Psoas muscle (tissue), 8 donors: ENCODE measurements at regions of chr1 and their contacts with region 1.

Region 1: DNA sequence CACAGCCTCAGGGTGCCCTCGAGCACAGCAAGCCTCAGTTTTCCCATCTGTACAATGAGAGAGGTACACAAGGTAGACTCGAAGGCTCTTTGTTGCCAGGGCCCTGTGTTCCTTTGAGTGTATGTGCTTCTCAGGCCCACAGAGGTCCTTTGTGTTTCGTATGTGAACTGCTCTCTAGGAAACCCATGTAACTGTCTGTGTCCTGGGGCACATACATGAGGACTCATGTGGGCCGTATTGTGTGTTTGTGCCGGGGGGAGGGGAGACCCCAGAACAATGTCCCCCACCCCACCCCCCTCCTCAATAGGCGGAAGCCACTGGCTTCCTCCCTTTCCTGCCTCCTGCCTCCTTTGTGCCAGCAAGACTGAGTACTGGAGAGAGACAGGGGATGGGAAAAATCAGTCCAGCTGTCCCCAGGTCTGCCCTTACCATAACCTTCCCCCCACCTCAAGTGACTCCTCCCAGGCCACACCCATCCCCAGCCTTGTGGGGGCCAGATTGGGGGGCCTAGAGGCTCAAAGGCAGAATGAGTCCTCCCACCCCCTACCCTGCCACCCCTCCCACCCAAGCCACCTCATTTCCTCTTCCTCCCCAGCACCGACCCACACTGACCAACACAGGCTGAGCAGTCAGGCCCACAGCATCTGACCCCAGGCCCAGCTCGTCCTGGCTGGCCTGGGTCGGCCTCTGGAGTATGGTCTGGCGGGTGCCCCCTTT is at the start of gene TIE1:
- DNase-seq: peak in 1 of 2 donors; percentile 31
- ATAC-seq: peak; percentile 21 to 62 (median 52)
- H3K4me3 ChIP-seq: peak within 1 kb of the TSS; percentile 54
- H3K27ac ChIP-seq: peak within 1 kb of the TSS; percentile 53
- H3K4me1 ChIP-seq: peaks cover 12% of the 10 kb centered on the region
- H3K27me3 ChIP-seq: no peaks in the 10 kb centered on the region
- CTCF ChIP-seq: no peak
- total RNA-seq, gene TIE1: 8.2 to 29.7 (median 14.7) TPM

Region 2: DNA sequence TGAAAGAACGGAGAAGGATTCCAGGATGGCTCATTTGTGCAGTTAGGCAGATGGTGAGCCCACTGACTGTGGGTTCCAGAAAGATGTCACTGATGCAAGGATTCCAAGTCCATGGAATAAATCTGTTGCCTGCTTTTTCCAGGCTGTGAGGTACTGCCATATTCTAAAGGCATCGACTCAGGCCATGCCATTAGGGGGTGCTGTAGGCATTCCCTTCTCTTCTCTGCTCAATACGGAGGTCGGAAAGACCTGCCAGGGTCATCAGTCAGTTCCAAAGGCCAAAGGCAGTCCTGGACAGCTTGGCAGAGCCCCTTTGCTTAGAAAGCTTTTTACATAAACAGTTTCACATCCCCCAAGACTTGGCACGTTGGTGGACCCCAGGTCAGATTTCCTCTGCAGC is 62.5 kb before region 1 on chr1:
- intact Hi-C with region 1: loop called in 1 of 2 experiments (anchors 5 kb)
- DNase-seq: peak; percentile 39 to 57
- ATAC-seq: peak; percentile 51 to 79 (median 75)
- H3K4me3 ChIP-seq: no peak overlapping the region
- H3K27ac ChIP-seq: no peak overlapping the region
- H3K4me1 ChIP-seq: no peaks in the 10 kb centered on the region
- H3K27me3 ChIP-seq: no peaks in the 10 kb centered on the region
- CTCF ChIP-seq: peak; percentile 49